Calu3 (cell line): ENCODE measurements at regions of chr6 and their contacts with region 1.

Region 1: GRCh38 chr6:45608252-45608911 is 230.6 kb upstream of the SUPT3H start:
- DNase-seq: peak; percentile 42
- H3K4me3 Mint-ChIP-seq: peak overlapping the region; percentile 34
- H3K27ac Mint-ChIP-seq: peak overlapping the region; percentile 53
- H3K4me1 Mint-ChIP-seq: peaks cover 55% of the 10 kb centered on the region
- H3K27me3 Mint-ChIP-seq: no peaks in the 10 kb centered on the region
- CTCF ChIP-seq: no peak

Region 2: DNA sequence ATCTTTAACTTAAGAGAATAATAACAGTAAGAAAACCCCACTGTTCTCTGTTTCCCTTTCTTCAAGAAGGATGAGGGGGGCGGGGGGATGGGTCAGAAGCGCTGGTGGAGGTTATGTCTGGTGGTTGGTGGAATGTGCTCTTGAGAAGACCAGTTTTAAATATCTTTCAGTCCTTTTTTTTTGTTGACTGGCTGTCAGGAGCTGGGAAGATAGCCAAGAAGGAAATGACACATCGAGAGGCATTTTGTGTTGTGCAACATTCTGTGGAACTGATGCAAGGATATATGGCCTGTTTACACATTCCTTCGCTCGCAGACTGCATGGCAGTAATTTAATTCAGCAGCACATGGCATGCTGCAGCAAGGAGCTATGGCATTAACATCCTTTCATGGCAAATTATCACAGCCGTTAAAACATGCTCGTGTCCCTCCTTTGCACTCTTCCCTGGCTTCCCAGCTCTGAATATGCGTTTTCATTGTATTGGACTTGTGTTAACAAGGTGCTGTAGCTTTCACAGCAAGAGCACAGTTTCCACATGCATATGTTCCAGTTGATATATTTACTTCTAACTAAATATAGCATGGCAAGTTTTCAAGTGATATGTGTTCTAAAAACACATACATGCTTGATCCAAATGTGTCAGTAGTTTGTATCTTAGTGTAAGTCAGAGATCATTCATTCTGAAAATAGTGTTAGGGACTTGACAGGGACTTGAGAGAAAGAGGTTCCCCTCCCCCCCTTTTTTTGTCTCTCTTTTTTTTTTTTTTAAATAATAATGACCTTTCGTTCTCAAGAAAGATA is 162.4 kb before region 1 on chr6:
- CTCF ChIA-PET with region 1: interaction called, 4 read pairs
- intact Hi-C with region 1: loop called (anchors 5 kb)
- DNase-seq: peak; percentile 81
- H3K4me3 Mint-ChIP-seq: peak overlapping the region; percentile 41
- H3K27ac Mint-ChIP-seq: peak overlapping the region; percentile 91
- H3K4me1 Mint-ChIP-seq: peaks cover 36% of the 10 kb centered on the region
- H3K27me3 Mint-ChIP-seq: no peaks in the 10 kb centered on the region
- CTCF ChIP-seq: no peak

Region 3: GRCh38 chr6:45514454-45515230 is 93.7 kb before region 1 on chr6:
- CTCF ChIA-PET with region 1: no interaction called
- intact Hi-C with region 1: no loop called
- DNase-seq: peak; percentile 44
- H3K4me3 Mint-ChIP-seq: no peak overlapping the region
- H3K27ac Mint-ChIP-seq: no peak overlapping the region
- H3K4me1 Mint-ChIP-seq: no peaks in the 10 kb centered on the region
- H3K27me3 Mint-ChIP-seq: no peaks in the 10 kb centered on the region
- CTCF ChIP-seq: no peak

Region 4: GRCh38 chr6:45566882-45567281 is 41.5 kb before region 1 on chr6:
- CTCF ChIA-PET with region 1: interaction called, 3 read pairs
- intact Hi-C with region 1: loop called (anchors 2 kb)
- DNase-seq: peak; percentile 77
- H3K4me3 Mint-ChIP-seq: no peak overlapping the region
- H3K27ac Mint-ChIP-seq: peak overlapping the region; percentile 78
- H3K4me1 Mint-ChIP-seq: peaks cover 52% of the 10 kb centered on the region
- H3K27me3 Mint-ChIP-seq: no peaks in the 10 kb centered on the region
- CTCF ChIP-seq: no peak